ENCODE measurements at regions of chr3 and their contacts with region 1.

Region 1: DNA sequence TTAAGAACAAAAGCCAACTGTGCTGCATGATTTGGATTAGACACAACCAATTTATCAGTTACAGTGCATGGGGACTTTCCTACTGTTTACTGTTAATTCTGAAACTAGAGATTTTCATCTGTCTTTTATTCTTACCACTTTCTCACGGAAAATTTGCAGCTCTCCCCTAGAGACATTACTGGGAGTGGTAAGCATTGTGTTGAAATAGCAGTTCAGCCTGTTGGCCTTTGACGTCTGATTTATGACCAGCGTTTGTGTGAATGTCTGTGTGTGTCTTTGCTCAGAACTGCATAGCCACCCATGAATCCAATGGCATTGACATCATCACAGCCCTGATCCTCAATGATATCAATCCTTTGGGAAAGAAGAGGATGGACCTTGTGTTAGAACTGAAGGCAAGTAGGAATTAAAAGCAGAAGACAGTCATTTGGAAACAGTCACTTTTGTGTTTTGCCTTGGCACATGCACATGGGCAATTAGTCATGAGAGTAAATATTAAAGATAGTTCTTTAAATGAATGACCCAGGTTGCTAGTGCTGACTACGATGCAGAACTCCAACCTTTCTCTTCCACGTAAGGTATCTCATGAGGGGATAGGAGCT is 202.2 kb upstream of the BHLHE40 start:
- DNase-seq: peak; percentile 45
- H3K4me3 Mint-ChIP-seq: peak overlapping the region; percentile 47
- H3K27ac Mint-ChIP-seq: peak overlapping the region; percentile 91
- H3K4me1 Mint-ChIP-seq: peaks cover 37% of the 10 kb centered on the region
- H3K27me3 Mint-ChIP-seq: no peaks in the 10 kb centered on the region

Region 2: DNA sequence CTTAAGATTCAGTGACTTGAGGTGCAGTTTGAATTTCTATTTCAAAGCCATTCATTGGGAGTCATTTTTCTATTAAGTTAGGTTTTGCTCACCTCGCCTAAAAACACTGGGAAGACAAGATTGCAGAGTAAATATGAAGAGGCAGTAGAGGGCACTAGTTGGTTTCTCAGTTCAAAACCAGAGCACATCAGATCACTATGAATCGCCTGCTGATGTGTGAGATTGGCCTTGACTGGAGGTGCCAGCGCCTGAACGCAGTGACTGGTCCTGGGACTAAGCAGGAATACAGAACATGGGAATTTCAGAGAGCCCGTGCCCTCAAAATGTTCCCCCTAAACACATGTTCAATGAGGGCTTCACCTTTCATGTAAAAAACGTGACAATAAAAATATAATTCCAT is 55.0 kb before region 1 on chr3:
- CTCF ChIA-PET with region 1: interaction called, 3 read pairs
- POLR2A ChIA-PET with region 1: no interaction called
- intact Hi-C with region 1: loop called (anchors 2 kb)
- DNase-seq: peak; percentile 41
- H3K4me3 Mint-ChIP-seq: no peak overlapping the region
- H3K27ac Mint-ChIP-seq: no peak overlapping the region
- H3K4me1 Mint-ChIP-seq: peaks cover 19% of the 10 kb centered on the region
- H3K27me3 Mint-ChIP-seq: no peaks in the 10 kb centered on the region

Region 3: GRCh38 chr3:4741404-4742307 is 35.4 kb before region 1 on chr3:
- CTCF ChIA-PET with region 1: no interaction called
- POLR2A ChIA-PET with region 1: no interaction called
- intact Hi-C with region 1: loop called (anchors 5 kb)
- DNase-seq: peak; percentile 52
- H3K4me3 Mint-ChIP-seq: peak overlapping the region; percentile 3
- H3K27ac Mint-ChIP-seq: peak overlapping the region; percentile 85
- H3K4me1 Mint-ChIP-seq: peaks cover 51% of the 10 kb centered on the region
- H3K27me3 Mint-ChIP-seq: no peaks in the 10 kb centered on the region

Region 4: GRCh38 chr3:4751502-4752101 is 25.5 kb before region 1 on chr3:
- CTCF ChIA-PET with region 1: no interaction called
- POLR2A ChIA-PET with region 1: interaction called, 5 read pairs
- intact Hi-C with region 1: loop called (anchors 1 kb)
- DNase-seq: no peak
- H3K4me3 Mint-ChIP-seq: no peak overlapping the region
- H3K27ac Mint-ChIP-seq: peak overlapping the region; percentile 71
- H3K4me1 Mint-ChIP-seq: peaks cover 48% of the 10 kb centered on the region
- H3K27me3 Mint-ChIP-seq: no peaks in the 10 kb centered on the region

Region 5: DNA sequence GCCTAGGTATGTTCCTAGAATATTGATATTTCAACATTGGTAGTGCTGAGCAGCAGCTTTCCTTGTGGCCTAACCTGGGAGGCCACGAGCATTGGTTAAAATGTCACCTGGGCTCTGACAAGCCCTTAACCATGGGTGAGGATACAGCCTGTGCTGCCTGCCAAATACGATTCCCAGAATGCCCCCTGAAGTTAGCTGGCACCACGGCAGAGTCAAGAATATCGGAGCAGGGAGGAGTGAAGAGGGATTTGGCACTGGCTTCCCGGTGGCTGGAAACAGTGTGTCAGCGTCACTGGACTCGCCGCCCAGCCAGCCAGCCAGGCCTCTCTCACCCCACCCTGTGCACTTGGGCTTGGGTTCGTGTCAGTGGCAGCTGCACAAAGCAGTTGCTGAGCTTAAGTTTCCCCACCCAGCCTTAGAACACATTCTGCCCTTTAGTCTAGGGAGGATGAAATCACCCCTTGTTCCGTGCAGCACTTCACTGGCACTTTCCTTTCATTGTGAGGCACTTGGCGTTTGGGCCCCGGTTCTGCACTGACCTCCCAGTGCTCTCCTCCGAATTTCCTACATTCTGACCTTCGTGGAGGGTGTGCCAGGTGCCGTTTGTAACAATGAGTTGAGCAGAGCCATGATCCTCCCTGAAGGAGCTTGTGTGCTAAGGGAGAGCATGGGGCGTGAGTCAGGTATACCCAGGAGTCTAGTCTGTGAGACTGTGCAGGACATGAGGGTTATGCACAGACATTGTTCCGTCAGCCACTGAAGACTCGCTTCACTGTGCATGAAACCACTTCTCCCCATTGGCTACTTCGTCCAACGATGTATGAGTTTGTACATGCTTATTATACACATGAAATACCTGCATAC is 49.4 kb after region 1 on chr3:
- CTCF ChIA-PET with region 1: no interaction called
- POLR2A ChIA-PET with region 1: no interaction called
- intact Hi-C with region 1: loop called (anchors 2 kb)
- DNase-seq: no peak
- H3K4me3 Mint-ChIP-seq: peak overlapping the region; percentile 70
- H3K27ac Mint-ChIP-seq: peak overlapping the region; percentile 85
- H3K4me1 Mint-ChIP-seq: peaks cover 94% of the 10 kb centered on the region
- H3K27me3 Mint-ChIP-seq: no peaks in the 10 kb centered on the region

Region 6: DNA sequence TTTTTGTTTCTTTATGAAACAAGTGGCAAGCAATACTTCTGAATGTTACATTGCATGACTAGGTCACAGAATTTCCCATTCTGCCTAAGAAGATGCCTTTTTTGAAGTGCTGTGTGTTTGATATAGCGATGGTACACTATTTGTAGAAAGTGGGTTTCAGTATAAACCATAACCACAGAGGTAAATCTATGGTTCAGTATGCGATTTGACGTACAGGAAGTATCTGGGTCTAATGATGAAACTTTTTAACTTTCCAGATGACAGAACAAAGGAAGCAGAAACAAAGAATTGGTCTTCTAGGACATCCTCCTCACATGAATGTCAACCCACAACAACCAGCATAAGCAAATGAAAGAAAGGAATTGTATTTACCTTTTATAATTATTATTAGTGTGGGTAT is 68.8 kb after region 1 on chr3:
- CTCF ChIA-PET with region 1: no interaction called
- POLR2A ChIA-PET with region 1: interaction called, 6 read pairs
- intact Hi-C with region 1: loop called (anchors 2 kb)
- DNase-seq: no peak
- H3K4me3 Mint-ChIP-seq: peak overlapping the region; percentile 14
- H3K27ac Mint-ChIP-seq: peak overlapping the region; percentile 83
- H3K4me1 Mint-ChIP-seq: peaks cover 96% of the 10 kb centered on the region
- H3K27me3 Mint-ChIP-seq: no peaks in the 10 kb centered on the region

Region 7: DNA sequence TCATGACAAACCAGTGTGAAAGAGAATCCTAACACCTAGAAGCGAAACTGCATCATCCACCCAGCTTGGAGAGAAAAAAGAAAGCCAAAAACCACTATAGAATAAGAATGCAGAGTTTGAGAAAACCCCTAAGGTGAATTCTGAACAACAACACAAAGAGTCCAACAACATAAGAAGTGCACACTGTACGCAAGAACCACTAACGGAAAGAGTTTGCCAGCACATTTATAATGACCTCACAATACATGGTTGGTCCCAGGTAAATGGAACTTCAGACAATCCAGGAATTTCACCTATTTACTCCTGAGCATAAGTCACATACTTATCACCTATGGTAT is 73.8 kb after region 1 on chr3:
- CTCF ChIA-PET with region 1: no interaction called
- POLR2A ChIA-PET with region 1: interaction called, 3 read pairs
- intact Hi-C with region 1: loop called (anchors 2 kb)
- DNase-seq: peak; percentile 43
- H3K4me3 Mint-ChIP-seq: peak overlapping the region; percentile 53
- H3K27ac Mint-ChIP-seq: peak overlapping the region; percentile 88
- H3K4me1 Mint-ChIP-seq: peaks cover 88% of the 10 kb centered on the region
- H3K27me3 Mint-ChIP-seq: no peaks in the 10 kb centered on the region

Measured in activated CD4-positive, alpha-beta memory T cell treated with anti-CD3 and anti-CD28 coated beads for 36 hours (primary cell).